Left ventricle myocardium inferior (tissue), 1 donor: ENCODE measurements at regions of chr2 and their contacts with region 1.

Region 1: GRCh38 chr2:82043867-82044266 is 1739.3 kb upstream of the LRRTM1 start:
- DNase-seq: no peak
- H3K4me3 ChIP-seq: no peak overlapping the region
- H3K27ac ChIP-seq: no peak overlapping the region
- H3K4me1 ChIP-seq: no peaks in the 10 kb centered on the region
- H3K27me3 ChIP-seq: no peaks in the 10 kb centered on the region
- CTCF ChIP-seq: no peak

Region 2: DNA sequence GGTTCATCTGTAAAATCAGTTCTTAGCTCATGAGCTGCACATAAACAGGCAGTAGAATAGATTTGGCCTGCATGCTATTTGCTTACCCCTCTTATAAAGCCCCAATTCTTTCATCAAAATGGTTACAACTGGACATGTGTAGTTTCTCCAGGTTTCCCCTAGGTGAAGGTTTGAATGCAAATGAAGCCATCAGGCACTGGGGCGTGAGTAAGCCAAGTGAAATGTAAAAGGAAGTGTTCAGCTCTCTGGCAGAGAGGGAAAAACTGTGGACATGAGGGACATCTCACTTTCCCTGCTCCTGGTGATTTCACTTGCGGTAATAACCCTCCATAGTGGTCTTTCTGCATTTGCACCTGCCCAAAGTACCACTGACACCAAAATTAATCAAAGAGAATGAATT is 337.0 kb before region 1 on chr2:
- intact Hi-C with region 1: no loop called
- DNase-seq: no peak
- H3K4me3 ChIP-seq: no peak overlapping the region
- H3K27ac ChIP-seq: no peak overlapping the region
- H3K4me1 ChIP-seq: no peaks in the 10 kb centered on the region
- H3K27me3 ChIP-seq: no peaks in the 10 kb centered on the region
- CTCF ChIP-seq: no peak

Region 3: GRCh38 chr2:81942136-81942680 is 101.7 kb before region 1 on chr2:
- intact Hi-C with region 1: no loop called
- DNase-seq: no peak
- H3K4me3 ChIP-seq: no peak overlapping the region
- H3K27ac ChIP-seq: no peak overlapping the region
- H3K4me1 ChIP-seq: no peaks in the 10 kb centered on the region
- H3K27me3 ChIP-seq: no peaks in the 10 kb centered on the region
- CTCF ChIP-seq: no peak

Region 4: GRCh38 chr2:82089518-82089917 is 45.7 kb after region 1 on chr2:
- intact Hi-C with region 1: loop called (anchors 2 kb)
- DNase-seq: no peak
- H3K4me3 ChIP-seq: no peak overlapping the region
- H3K27ac ChIP-seq: no peak overlapping the region
- H3K4me1 ChIP-seq: no peaks in the 10 kb centered on the region
- H3K27me3 ChIP-seq: no peaks in the 10 kb centered on the region
- CTCF ChIP-seq: no peak

Region 5: DNA sequence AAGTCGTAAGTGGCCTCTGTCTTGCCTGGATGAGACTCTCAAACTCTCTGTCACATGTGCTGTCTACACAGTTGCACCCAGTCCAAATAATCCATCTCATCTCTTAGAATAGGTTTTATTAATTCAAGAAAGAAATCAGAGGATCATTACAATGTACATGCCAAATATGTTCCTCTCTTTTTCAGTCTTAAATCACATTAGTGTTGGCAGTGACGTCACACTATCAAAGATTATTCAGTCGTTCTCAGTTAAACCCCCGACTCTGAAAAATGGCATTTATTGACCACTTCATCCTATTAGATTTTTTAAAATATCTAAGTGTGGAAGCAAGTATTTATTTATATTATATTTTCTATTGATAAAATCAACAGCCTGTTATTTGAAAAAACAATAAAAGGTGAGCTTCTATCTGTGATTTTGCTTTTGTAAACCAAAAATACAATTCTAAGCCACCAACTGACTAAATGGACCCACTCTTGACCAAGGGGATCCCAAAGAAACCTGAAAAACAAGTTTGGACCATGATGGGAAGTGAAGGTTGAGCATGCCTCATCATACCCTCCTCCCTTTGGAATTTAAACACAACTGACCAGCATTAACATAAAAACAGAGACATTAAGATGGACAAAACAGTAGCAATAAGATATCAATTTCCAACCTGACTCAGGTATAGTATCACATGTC is 155.1 kb after region 1 on chr2:
- intact Hi-C with region 1: no loop called
- DNase-seq: no peak
- H3K4me3 ChIP-seq: no peak overlapping the region
- H3K27ac ChIP-seq: no peak overlapping the region
- H3K4me1 ChIP-seq: no peaks in the 10 kb centered on the region
- H3K27me3 ChIP-seq: no peaks in the 10 kb centered on the region
- CTCF ChIP-seq: no peak